Panc1 (cell line): ENCODE measurements at regions of chr11 and their contacts with region 1.

Region 1: DNA sequence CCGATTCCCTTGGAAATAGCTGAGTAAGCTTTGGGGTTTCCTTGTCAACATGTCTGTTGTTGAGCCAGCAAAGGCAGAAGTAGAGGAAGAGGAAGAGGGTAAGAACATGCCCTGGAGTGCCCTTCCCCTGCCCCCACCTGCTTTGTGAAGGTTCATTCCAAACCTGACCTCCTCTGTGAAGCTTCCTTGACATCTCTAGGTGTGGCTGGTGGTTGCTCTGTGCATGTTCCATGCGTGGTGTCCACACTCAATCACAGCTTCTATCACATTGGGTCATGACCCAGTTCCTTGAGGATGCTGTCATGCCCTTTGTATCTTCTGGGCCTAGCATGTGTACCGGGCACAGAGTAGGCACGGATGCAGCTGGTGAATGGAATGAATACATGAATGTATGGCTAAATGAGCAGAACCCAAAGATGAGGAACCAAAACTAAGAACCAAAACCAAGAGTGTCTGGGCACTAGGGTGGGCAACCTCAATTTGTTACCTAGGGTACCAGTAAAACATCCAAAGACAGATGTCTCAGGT is 23.7 kb upstream of the FXYD6 start:
- DNase-seq: no peak
- ATAC-seq: no peak
- H3K4me3 ChIP-seq: no peak overlapping the region
- H3K27ac ChIP-seq: no peak overlapping the region
- H3K4me1 ChIP-seq: no peaks in the 10 kb centered on the region
- H3K27me3 ChIP-seq: peaks cover 11% of the 10 kb centered on the region
- CTCF ChIP-seq: no peak

Region 2: DNA sequence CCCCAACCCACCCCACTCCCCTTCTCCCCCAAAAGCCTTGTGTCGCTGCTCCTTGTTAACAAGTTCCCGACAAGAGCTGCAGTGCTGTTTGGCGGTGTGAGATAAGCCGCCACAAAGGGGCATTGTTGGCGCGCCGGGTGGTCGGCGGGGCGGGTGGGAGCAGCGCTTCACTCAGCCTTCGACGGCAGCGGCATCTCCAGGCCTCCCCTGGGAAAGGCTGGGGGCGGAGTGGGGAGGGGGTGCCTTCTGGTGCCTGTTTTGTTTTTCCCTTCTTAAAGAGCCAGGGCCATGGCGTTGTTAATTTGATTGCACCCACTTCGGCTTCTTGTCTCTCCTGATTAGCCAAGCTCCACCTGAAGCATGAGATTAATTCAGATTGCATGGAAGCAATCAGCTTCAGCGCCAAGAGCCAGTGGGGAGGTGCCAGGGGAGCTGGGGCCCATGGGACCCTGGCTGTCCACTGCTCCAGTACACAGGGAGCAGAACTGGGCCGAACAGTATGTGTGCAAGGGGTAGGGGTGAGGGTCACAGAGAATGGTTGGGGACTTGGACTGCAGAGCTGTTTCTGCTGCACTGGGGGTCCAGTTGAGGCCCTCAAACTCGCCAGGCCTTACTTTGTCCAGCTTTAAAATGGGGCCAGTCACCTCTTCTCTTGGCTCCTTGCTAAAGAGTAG is 407.5 kb before region 1 on chr11:
- CTCF ChIA-PET with region 1: no interaction called
- POLR2A ChIA-PET with region 1: no interaction called
- in situ Hi-C with region 1: no loop called
- intact Hi-C with region 1: no loop called
- DNase-seq: no peak
- ATAC-seq: no peak
- H3K4me3 ChIP-seq: no peak overlapping the region
- H3K27ac ChIP-seq: no peak overlapping the region
- H3K4me1 ChIP-seq: no peaks in the 10 kb centered on the region
- H3K27me3 ChIP-seq: no peaks in the 10 kb centered on the region
- CTCF ChIP-seq: no peak

Region 3: GRCh38 chr11:117923773-117924172 is 23.6 kb after region 1 on chr11:
- CTCF ChIA-PET with region 1: interaction called, 13 read pairs
- POLR2A ChIA-PET with region 1: no interaction called
- in situ Hi-C with region 1: no loop called
- intact Hi-C with region 1: no loop called
- DNase-seq: no peak
- ATAC-seq: no peak
- H3K4me3 ChIP-seq: no peak overlapping the region
- H3K27ac ChIP-seq: no peak overlapping the region
- H3K4me1 ChIP-seq: no peaks in the 10 kb centered on the region
- H3K27me3 ChIP-seq: peaks cover 15% of the 10 kb centered on the region
- CTCF ChIP-seq: no peak

Region 4: GRCh38 chr11:119218141-119218878 is 1318.1 kb after region 1 on chr11:
- CTCF ChIA-PET with region 1: no interaction called
- POLR2A ChIA-PET with region 1: no interaction called
- in situ Hi-C with region 1: no loop called
- intact Hi-C with region 1: no loop called
- DNase-seq: peak; percentile 94
- ATAC-seq: peak; percentile 96
- H3K4me3 ChIP-seq: peak overlapping the region in 1 of 2 experiments; percentile 18; a peak in 1 of 4 replicates
- H3K27ac ChIP-seq: peak overlapping the region; percentile 78
- H3K4me1 ChIP-seq: peaks cover 28% of the 10 kb centered on the region
- H3K27me3 ChIP-seq: no peaks in the 10 kb centered on the region
- CTCF ChIP-seq: no peak